SK-N-SH (cell line): ENCODE measurements at regions of chr19 and their contacts with region 1.

Region 1: GRCh38 chr19:17215125-17215971 is at the start of gene USE1:
- DNase-seq: peak; percentile 97
- H3K4me3 ChIP-seq: peak within 1 kb of the TSS; percentile 71 to 73
- H3K27ac ChIP-seq: peak within 1 kb of the TSS; percentile 89 to 96
- H3K4me1 ChIP-seq: peaks cover 5 to 14% of the 10 kb centered on the region in 2 experiments
- H3K27me3 ChIP-seq: no peaks in the 10 kb centered on the region
- CTCF ChIP-seq: no peak
- EP300 ChIP-seq: peak in 1 of 2 experiments; percentile 53; a peak in 1 of 4 replicates
- RAD21 ChIP-seq: no peak
- polyA plus RNA-seq, gene USE1: 63.9 and 81.8 TPM in 2 replicates

Region 2: DNA sequence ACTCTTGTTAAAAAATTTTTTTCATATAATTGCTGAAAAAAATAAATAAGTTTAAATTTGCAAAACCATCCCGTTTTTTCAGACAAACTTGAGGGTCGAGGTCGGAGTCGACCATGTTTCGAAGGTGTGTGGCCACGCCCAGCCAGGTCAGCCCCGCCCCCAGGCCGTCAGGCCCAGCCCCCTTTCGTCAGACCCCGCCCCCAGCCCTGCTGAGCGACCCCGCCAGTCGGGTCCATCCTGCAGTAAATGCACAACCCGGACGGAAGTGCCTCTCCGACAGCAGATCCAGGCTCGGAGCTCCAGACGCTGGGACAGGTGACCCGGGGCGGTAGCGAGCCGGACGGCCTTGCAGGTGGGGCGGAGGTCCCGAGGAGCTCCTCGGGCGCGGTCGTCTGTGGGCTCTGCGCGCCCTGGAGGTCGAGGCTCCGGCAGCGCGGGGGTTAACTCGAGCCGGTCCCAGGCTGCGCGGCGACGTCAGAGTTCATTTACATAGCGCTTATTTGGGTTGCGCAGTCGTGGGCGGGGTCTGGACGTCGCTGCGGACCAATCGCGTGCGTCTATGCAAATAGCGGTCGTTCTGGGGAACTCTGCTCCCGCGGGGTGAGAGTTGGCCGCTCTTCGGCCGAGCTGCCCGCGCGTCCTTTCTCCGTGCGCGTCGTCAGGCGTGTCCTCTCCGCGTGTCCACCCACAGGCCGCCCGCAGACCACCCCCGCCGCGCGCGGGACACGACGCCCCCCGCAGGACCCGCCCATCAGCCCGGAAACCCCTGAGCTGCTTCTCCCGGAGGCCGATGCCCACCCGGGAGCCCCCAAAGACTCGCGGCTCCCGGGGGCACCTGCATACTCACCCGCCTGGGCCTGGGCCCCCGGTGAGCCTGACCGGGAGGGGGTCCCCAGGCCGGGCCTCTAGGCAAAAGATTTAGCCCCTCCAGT is 10.9 kb after region 1 on chr19 and contains the start of gene OCEL1:
- CTCF ChIA-PET with region 1: interaction called, 13 read pairs
- POLR2A ChIA-PET with region 1: interaction called, 33 read pairs
- DNase-seq: peak; percentile 95
- H3K4me3 ChIP-seq: peak within 1 kb of the TSS; percentile 58 to 83
- H3K27ac ChIP-seq: peak within 1 kb of the TSS; percentile 75 to 82
- H3K4me1 ChIP-seq: peaks cover 0 to 3% of the 10 kb centered on the region in 2 experiments; a peak in 1 of 4 replicates
- H3K27me3 ChIP-seq: no peaks in the 10 kb centered on the region
- CTCF ChIP-seq: no peak
- EP300 ChIP-seq: no peak
- RAD21 ChIP-seq: no peak
- polyA plus RNA-seq, gene OCEL1: 9.1 and 9.8 TPM in 2 replicates

Region 3: GRCh38 chr19:17235618-17236377 is 20.4 kb after region 1 on chr19:
- CTCF ChIA-PET with region 1: interaction called, 8 read pairs
- POLR2A ChIA-PET with region 1: interaction called, 12 read pairs
- DNase-seq: peak; percentile 90
- H3K4me3 ChIP-seq: peak overlapping the region; percentile 53 to 70
- H3K27ac ChIP-seq: peak overlapping the region; percentile 48 to 84
- H3K4me1 ChIP-seq: peaks cover 13 to 24% of the 10 kb centered on the region in 2 experiments; a peak in 3 of 4 replicates
- H3K27me3 ChIP-seq: no peaks in the 10 kb centered on the region
- CTCF ChIP-seq: peak; percentile 49
- EP300 ChIP-seq: no peak
- RAD21 ChIP-seq: peak; percentile 56

Region 4: GRCh38 chr19:17245244-17245984 is 30.1 kb after region 1 on chr19 and contains the start of gene NR2F6:
- CTCF ChIA-PET with region 1: interaction called, 4 read pairs
- POLR2A ChIA-PET with region 1: interaction called, 15 read pairs
- DNase-seq: no peak
- H3K4me3 ChIP-seq: peak within 1 kb of the TSS; percentile 92 to 97
- H3K27ac ChIP-seq: peak within 1 kb of the TSS; percentile 22 to 81; a peak in 3 of 4 replicates
- H3K4me1 ChIP-seq: peaks cover 6 to 26% of the 10 kb centered on the region in 2 experiments; a peak in 2 of 4 replicates
- H3K27me3 ChIP-seq: no peaks in the 10 kb centered on the region
- CTCF ChIP-seq: no peak
- EP300 ChIP-seq: no peak
- RAD21 ChIP-seq: no peak
- polyA plus RNA-seq, gene NR2F6: 31.7 and 37.3 TPM in 2 replicates

Region 5: DNA sequence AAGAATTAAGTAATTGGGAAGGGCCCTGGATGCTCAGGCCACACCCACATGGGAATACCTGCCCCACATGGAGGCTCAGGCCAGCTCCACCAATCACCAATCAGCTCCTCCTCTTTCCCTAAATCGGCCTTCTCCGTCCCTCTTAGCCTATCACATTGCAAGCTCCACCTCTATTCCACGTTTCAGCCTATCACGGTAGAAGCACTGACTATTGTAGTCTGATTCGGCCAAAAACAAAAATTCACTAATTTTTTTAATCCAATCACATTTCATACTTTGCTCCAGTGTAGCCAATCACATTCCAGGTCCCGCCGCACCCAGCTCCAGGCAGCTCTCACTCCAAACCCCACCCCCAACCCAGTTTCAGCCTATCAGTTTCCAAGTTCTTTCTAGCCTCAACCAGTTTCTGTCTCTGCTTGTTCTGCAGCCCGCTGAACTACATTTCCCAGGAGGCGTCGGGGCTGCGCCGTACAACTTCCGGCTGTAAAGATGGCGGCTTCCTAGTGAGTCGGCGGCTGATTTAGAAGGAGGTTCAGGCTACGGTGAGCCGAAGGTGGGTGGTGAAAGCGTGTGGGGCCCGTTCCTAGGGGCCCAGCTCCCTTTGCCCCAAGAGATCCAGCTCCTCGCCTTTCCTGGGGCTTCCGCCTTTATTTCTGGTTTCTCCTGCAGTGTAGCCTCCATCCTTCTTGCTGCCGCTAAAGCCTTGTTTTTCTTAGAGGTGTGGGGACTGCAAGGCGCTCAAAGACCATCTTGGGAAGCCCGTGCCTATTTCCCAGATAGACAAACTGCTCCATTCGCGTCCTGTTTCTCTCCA is 51.8 kb after region 1 on chr19 and contains the start of gene BABAM1:
- CTCF ChIA-PET with region 1: interaction called, 3 read pairs
- POLR2A ChIA-PET with region 1: interaction called, 14 read pairs
- DNase-seq: peak; percentile 96
- H3K4me3 ChIP-seq: peak within 1 kb of the TSS; percentile 84 to 98
- H3K27ac ChIP-seq: peak within 1 kb of the TSS; percentile 76 to 77
- H3K4me1 ChIP-seq: peaks cover 0 to 6% of the 10 kb centered on the region in 2 experiments; a peak in 1 of 4 replicates
- H3K27me3 ChIP-seq: no peaks in the 10 kb centered on the region
- CTCF ChIP-seq: no peak
- EP300 ChIP-seq: no peak
- RAD21 ChIP-seq: no peak
- polyA plus RNA-seq, gene BABAM1: 192 TPM in 2 replicates